Caco-2 (cell line): ENCODE measurements at regions of chr1 and their contacts with region 1.

Region 1: DNA sequence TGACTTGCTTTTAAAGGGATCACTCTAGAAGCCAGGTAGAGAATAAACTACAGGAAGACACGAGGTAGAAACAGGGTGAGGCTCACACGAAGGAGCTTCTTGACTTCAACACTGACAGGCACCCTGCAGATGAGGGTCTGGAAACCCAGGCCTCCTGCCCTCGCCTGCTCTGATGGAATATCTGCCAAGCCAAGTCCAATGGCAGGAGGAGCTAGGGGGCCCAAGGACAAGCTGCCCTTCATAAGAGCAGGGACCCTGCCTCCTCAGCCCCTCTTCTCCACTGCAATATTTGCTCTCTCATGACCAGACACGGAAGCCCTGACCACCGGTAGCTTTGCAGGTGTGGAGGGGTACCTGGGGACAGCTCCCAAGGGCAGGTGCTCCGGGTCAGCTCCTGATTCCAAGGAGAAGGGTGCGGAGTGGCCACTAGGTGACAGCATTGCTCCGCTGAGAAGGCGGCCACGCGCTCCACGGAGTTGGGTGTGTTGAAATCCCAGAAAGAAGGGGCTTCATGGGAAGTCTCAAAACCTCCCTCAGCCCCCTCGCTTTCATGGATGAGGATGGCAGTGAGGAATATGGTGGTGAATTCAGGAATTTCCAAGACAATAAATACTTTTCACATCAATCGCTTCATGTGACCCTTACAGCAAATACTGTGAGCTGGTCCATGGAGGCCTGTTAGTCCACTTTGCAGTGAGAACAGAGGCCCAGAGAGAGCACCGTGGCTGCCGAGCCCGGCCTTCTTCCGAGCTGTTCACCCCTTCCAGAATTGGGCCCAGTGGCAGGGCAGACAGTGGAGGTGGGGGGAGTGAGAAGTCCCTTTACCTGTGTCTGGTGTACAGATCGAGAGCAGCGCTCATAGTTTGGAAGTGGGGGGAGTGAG is 33.2 kb upstream of the PAX7 start:
- DNase-seq: peak; percentile 55 to 71
- H3K4me3 ChIP-seq: no peak overlapping the region
- H3K4me3 Mint-ChIP-seq: no peak overlapping the region
- H3K27ac Mint-ChIP-seq: no peak overlapping the region
- H3K4me1 ChIP-seq: no peaks in the 10 kb centered on the region
- H3K4me1 Mint-ChIP-seq: no peaks in the 10 kb centered on the region
- H3K27me3 ChIP-seq: no peaks in the 10 kb centered on the region
- H3K27me3 Mint-ChIP-seq: peaks cover 4% of the 10 kb centered on the region
- CTCF ChIP-seq: peak; percentile 88 to 92

Region 2: GRCh38 chr1:18681423-18681835 is 84.0 kb after region 1 on chr1:
- CTCF ChIA-PET with region 1: interaction called, 4 read pairs
- POLR2A ChIA-PET with region 1: no interaction called
- intact Hi-C with region 1: loop called (anchors 1 kb)
- DNase-seq: peak in 1 of 2 experiments; percentile 35
- H3K4me3 ChIP-seq: no peak overlapping the region
- H3K4me3 Mint-ChIP-seq: no peak overlapping the region
- H3K27ac Mint-ChIP-seq: no peak overlapping the region
- H3K4me1 ChIP-seq: no peaks in the 10 kb centered on the region
- H3K4me1 Mint-ChIP-seq: no peaks in the 10 kb centered on the region
- H3K27me3 ChIP-seq: no peaks in the 10 kb centered on the region; the same call in 1 of the 2 replicates
- H3K27me3 Mint-ChIP-seq: peaks cover 13% of the 10 kb centered on the region
- CTCF ChIP-seq: peak; percentile 54 to 67

Region 3: DNA sequence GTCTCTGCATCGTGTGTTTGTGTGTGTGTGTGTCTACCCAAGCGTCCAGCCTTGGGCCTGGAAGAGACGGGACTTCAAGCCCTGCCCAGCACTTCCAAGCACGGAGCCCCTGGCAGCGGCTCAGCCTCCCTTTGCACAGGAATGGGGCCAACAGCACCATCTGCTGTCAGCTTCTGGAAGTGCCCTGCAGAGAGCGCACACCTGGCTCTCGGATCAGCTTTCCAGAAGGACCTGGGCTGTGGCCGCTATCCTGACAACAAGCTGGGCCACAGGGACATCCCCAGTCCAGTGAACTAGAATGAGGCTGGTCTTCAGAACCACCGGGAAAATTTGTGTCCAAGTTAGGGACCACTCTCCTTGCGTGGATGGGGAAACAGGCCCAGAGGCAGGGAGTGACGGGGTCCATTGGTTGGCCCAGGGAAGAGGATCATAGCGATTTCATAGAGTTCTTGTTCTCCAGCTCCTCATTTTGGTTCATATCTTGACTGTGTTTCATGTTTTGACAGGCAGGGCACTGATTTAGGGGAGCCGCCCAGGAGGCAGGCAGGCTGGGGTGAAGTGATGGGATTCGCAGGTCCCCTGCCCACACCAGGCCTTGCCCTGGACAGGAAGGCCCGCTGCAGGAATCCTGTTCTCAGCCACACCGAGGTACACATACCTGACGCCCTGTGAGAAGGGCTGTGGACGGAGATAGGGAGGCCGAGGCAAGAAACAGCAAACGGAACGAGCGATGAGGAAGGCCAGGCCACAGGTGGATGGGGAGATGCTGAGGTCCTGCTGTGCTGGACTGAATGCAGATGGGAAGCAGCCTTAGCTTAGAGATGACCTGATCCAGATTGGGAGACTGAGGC is 223.6 kb after region 1 on chr1:
- CTCF ChIA-PET with region 1: interaction called, 18 read pairs
- POLR2A ChIA-PET with region 1: no interaction called
- intact Hi-C with region 1: loop called (anchors 1 kb)
- DNase-seq: peak; percentile 71 to 80
- H3K4me3 ChIP-seq: no peak overlapping the region
- H3K4me3 Mint-ChIP-seq: no peak overlapping the region
- H3K27ac Mint-ChIP-seq: no peak overlapping the region
- H3K4me1 ChIP-seq: no peaks in the 10 kb centered on the region
- H3K4me1 Mint-ChIP-seq: no peaks in the 10 kb centered on the region
- H3K27me3 ChIP-seq: no peaks in the 10 kb centered on the region; the same call in 1 of the 2 replicates
- H3K27me3 Mint-ChIP-seq: peaks cover 26% of the 10 kb centered on the region
- CTCF ChIP-seq: peak; percentile 84 to 85

Region 4: DNA sequence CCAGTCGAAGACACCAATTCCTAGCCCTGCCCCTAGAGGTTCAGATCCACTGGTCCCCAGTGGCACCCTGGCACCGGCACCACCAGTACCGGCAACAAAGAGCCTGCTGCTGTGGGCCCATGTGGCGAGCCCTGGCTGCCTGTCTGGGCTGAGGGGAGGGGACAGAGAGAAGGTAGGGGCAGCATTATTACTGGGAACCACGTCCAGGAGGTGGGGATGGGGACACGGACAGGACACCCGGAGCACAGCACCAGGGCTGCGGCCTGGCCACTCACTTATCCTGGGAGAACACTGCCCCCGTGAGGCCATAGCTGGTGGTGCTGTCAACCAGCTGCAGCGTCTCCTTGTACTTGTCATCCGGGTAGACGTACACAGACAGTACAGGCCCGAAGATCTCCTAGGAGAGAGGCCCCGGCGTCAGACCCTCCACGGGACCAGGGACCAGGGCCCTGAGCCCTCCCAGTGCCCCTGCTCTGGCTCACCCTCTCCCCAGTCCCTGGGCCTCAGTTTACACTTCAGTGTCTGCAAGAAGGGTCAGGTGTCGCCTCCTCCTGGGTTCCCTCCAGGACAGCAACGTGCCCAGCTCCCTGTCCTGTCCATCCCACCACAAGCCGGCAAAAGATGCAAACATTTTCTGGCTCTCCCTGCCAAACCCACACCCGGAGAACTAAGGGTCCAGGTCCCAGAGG is 277.9 kb after region 1 on chr1:
- CTCF ChIA-PET with region 1: interaction called, 8 read pairs
- POLR2A ChIA-PET with region 1: no interaction called
- intact Hi-C with region 1: loop called (anchors 1 kb)
- DNase-seq: peak; percentile 76 to 79
- H3K4me3 ChIP-seq: no peak overlapping the region
- H3K4me3 Mint-ChIP-seq: no peak overlapping the region
- H3K27ac Mint-ChIP-seq: no peak overlapping the region
- H3K4me1 ChIP-seq: no peaks in the 10 kb centered on the region
- H3K4me1 Mint-ChIP-seq: no peaks in the 10 kb centered on the region
- H3K27me3 ChIP-seq: no peaks in the 10 kb centered on the region
- H3K27me3 Mint-ChIP-seq: no peaks in the 10 kb centered on the region
- CTCF ChIP-seq: peak; percentile 59 to 68